ENCODE measurements at regions of chr17 and their contacts with region 1.

Region 1: DNA sequence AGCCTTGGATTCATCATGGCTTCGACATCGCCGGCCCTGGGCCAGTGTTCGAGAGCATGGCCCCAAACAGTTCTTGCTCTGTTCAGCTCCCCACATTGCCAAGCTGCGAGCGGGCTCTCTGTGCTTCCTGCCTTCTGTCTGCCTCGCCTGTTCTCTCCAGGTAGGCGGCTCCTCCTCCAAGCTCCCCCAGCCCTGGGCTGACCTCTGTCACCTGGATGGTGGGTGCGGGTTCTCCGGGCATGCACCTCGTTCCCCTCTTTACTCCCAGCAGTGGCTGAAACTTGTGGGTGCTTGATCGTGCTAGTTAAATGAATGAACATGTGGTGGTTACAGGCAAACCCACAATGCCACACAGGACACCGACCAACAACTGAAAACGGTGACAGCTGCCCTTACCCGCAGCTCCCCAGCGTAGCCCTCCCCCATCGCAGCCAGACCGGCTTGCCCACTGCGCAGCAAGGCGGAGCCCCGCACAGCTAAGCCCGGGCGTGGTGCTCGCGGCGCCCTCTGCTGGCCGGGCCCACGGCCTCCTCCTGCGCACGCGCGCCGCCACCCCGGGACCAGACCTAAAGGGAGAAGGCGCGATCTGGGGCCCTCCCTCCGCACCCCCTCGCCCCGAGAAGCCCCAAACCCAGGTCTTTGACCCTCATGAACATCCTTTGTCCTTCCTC is 23.0 kb upstream of the EIF1 start:
- DNase-seq: peak; percentile 88 to 94
- ATAC-seq: peak; percentile 92 to 96 (median 94)
- H3K4me3 ChIP-seq: peak overlapping the region; percentile 72
- H3K27ac ChIP-seq: peak overlapping the region; percentile 76
- H3K4me1 ChIP-seq: peaks cover 6% of the 10 kb centered on the region
- H3K27me3 ChIP-seq: no peaks in the 10 kb centered on the region
- CTCF ChIP-seq: peak; percentile 93

Region 2: DNA sequence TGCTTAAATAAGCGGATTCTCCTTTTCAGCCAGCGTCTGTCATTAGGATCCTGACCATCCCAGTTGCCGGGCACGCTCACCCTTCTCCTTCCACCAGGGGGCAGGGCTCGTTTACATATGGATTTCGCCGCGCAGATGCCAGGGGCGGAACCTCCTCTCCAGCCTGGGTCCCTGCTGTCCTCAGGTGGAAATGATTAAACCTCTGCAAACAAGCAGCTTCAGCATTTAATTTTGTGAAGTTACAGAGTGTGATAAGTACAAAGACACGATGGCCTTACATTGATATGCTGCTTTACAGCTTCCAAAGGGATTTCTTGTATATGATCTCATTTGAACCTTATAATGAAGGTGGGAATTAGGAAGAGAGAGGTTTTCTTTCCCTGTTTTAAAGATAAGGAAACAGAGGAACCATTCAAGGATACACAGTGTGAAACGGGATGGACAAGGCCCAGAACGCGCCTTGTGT is 862.1 kb before region 1 on chr17:
- intact Hi-C with region 1: loop called (anchors 2 to 10 kb)
- DNase-seq: peak; percentile 62 to 76
- ATAC-seq: peak; percentile 69 to 86 (median 78)
- H3K4me3 ChIP-seq: no peak overlapping the region
- H3K27ac ChIP-seq: no peak overlapping the region
- H3K4me1 ChIP-seq: no peaks in the 10 kb centered on the region
- H3K27me3 ChIP-seq: peaks cover 0 to 65% (median 2%) of the 10 kb centered on the region in 3 donors
- CTCF ChIP-seq: peak; percentile 83

Region 3: DNA sequence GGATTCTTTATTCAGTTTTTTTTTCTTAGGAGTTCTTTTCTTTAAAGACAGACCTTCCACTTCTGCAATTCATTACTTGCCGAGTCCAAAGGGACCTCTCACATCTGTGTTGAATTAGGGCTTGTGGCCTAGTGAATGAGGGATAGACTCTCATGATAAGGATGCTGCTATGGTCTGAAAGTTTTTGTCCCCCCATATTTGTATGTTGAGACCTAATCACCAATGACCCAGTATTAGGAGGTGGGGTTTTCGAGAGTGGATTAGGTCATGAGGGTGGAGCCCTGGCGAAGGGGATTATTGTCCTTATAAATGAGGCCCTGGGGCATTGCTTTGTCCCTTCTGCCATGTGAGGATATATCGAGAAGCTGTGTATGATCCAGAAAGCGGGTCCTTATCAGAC is 808.2 kb before region 1 on chr17:
- intact Hi-C with region 1: loop called in 1 of 2 experiments (anchors 5 kb)
- DNase-seq: no peak
- ATAC-seq: no peak
- H3K4me3 ChIP-seq: no peak overlapping the region
- H3K27ac ChIP-seq: no peak overlapping the region
- H3K4me1 ChIP-seq: no peaks in the 10 kb centered on the region
- H3K27me3 ChIP-seq: no peaks in the 10 kb centered on the region
- CTCF ChIP-seq: no peak

Region 4: DNA sequence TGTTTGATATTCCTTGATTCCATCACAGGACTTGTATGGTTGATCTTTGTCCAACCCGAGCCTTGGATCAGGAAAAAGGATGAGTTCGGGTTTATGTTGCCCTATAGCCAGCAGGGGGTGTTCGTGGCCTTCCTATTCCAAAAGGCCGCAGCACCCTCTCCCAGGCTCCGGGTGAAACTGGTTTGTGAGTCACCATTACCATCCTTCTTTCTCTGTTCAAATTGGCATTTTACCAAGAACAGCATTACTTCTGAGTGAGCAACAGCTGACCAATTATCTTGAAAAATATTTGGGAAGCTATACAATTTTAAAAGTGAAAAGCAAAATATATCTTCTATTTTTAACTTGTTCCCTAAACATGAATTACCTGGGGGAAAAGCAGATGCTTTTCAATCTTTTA is 756.4 kb before region 1 on chr17:
- intact Hi-C with region 1: loop called in 1 of 2 experiments (anchors 2 kb)
- DNase-seq: peak; percentile 56 to 85
- ATAC-seq: peak; percentile 96 to 98 (median 96)
- H3K4me3 ChIP-seq: no peak overlapping the region
- H3K27ac ChIP-seq: no peak overlapping the region
- H3K4me1 ChIP-seq: peaks cover 17% of the 10 kb centered on the region
- H3K27me3 ChIP-seq: peaks cover 0 to 22% (median 2%) of the 10 kb centered on the region in 3 donors
- CTCF ChIP-seq: peak; percentile 80

Region 5: DNA sequence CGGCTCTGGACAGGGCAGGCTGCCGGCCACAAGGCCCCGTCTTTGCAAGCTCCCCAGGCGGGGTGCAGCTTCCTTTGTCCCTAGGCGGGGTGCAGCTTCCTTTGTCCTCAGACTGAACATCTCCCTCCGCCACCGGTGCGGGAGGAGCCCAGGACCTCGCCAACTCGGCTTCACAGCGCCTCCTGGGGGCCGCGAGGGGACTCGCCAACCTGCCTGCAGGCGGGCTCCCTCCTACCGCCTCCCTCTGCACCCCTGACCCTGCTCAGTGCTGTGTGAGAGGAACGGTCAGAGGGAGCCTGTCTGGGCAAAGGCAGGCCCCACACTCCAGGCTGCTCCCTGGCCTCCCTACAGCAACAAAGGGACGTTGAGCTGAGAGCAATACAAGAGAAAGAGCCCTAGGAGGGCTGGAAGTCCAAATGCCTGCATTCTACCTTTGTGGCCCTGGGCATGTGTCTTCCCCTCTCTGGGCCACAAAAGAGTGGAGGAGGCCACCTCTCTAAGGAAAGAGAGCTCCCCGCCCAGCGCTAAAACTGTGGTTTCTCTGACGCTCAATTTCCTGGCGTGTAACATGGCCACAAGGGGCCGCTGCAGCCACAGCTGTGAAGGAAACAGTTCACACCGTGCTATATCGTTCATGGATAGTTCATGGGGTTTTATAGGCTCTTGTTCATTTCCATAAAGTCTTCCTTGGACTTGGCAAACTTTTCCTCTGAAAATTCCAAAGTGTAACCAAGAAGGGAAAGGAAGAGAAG is 116.7 kb before region 1 on chr17:
- intact Hi-C with region 1: loop called (anchors 2 to 5 kb)
- DNase-seq: peak; percentile 80 to 89
- ATAC-seq: peak; percentile 83 to 94 (median 88)
- H3K4me3 ChIP-seq: peak overlapping the region; percentile 34
- H3K27ac ChIP-seq: no peak overlapping the region
- H3K4me1 ChIP-seq: peaks cover 6% of the 10 kb centered on the region
- H3K27me3 ChIP-seq: peaks cover 0 to 10% (median 2%) of the 10 kb centered on the region in 3 donors
- CTCF ChIP-seq: peak; percentile 90

Region 6: DNA sequence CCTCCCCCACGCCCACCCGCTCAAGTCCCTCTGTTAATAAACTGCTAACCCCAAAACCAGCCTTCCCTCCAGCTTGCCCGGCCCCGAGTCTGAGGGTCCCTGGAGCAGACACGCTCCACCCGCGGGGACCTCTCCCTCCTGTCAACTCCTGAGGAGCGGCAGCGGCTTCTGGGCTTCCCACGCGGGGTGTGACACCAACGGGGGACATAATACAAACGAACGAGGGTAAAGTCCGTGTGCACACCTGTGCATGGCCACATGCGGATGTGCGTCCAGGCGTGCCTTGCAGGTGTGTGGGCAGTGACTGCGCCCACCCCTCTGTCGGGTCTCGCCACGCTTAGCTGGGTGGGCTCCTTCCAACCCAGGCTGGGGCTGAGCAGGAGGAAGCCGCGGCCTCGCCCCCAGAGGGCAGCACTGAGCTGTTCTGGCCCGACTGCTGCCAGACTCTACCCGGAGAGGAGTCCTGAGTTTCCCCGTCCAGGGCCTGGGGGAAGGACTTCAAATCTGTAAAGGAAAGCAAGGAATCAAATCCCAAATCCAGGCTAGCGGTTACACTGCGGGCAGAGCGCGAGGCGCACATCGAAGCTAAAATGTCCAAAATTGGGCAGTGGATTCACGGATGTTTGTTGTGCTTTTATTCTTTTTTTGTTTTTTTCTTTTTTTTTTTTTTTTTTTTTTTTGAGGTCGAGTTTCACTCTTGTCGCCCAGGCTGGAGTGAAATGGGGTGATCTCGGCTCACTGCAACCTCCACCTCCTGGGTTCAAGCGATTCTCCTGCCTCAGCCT is 17.1 kb before region 1 on chr17:
- intact Hi-C with region 1: loop called in 1 of 2 experiments (anchors 1 kb)
- DNase-seq: peak; percentile 86 to 93
- ATAC-seq: peak; percentile 95 to 98 (median 96)
- H3K4me3 ChIP-seq: peak overlapping the region; percentile 61
- H3K27ac ChIP-seq: no peak overlapping the region
- H3K4me1 ChIP-seq: peaks cover 9% of the 10 kb centered on the region
- H3K27me3 ChIP-seq: no peaks in the 10 kb centered on the region
- CTCF ChIP-seq: peak; percentile 86